GM10248 (cell line): ENCODE measurements at regions of chr12 and their contacts with region 1.

Region 1: GRCh38 chr12:6451348-6452244 is at the start of gene TAPBPL:
- DNase-seq: peak; percentile 84
- CTCF ChIP-seq: no peak

Region 2: DNA sequence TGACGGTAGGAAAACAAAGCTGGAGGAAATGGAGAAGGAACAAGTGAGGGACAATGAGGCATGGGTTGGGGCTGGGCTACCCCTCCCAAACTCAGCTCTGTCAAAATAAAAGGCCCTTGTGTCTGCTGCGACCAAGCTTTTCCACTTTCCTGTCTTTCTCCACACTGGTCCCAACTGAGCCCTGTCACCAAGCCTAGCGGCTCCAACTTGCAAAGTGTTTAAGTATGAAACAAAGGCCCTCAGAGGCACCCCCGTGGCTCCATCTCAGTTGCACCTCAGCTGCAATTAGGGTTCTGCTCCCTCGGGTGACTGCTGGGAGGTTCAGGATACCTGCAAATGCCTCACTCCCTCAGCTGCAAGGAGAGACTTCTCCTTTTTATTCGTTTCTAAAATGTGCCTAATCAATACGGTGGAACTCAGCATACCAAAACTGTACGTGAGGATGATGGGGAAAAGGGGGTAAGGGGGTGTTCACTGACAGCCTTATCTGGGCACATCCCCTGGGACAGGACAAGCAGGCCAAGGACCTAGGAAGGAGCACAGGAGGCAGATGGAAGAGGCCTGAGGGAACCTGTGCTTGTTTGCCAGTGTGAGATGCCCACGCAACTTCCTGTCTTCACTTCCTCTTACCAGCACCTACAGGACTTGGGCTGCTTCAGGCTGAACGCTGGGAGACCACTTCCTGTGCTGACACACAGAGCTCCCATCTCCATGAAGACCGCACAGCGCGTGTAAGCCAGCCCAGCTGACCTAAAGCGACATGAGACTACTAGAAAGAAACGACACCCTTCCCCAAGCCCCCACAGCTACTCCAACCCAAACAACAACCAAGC is 10.0 kb after region 1 on chr12:
- CTCF ChIA-PET with region 1: interaction called, 76 read pairs
- POLR2A ChIA-PET with region 1: interaction called, 16 read pairs
- DNase-seq: peak; percentile 84
- CTCF ChIP-seq: no peak